B cell (primary cell): ENCODE measurements at regions of chr12 and their contacts with region 1.

Region 1: GRCh38 chr12:92145731-92146496 is at the start of gene BTG1:
- DNase-seq: peak; percentile 100
- ATAC-seq: peak; percentile 76
- H3K4me3 ChIP-seq: peak within 1 kb of the TSS; percentile 94 to 100 (median 96)
- H3K4me3 Mint-ChIP-seq: peak within 1 kb of the TSS; percentile 98
- H3K27ac ChIP-seq: peak within 1 kb of the TSS; percentile 87 to 91
- H3K27ac Mint-ChIP-seq: peak within 1 kb of the TSS; percentile 99
- H3K4me1 ChIP-seq: peaks cover 24 to 27% of the 10 kb centered on the region in 2 donors
- H3K4me1 Mint-ChIP-seq: peaks cover 31% of the 10 kb centered on the region
- H3K27me3 ChIP-seq: no peaks in the 10 kb centered on the region
- H3K27me3 Mint-ChIP-seq: no peaks in the 10 kb centered on the region
- CTCF ChIP-seq: no peak
- total RNA-seq, gene BTG1: 733 and 790 TPM in 2 replicates

Region 2: GRCh38 chr12:91577586-91578539 is 568.1 kb before region 1 on chr12:
- CTCF ChIA-PET with region 1: interaction called, 4 read pairs
- POLR2A ChIA-PET with region 1: no interaction called
- intact Hi-C with region 1: loop called (anchors 5 kb)
- DNase-seq: peak; percentile 45
- ATAC-seq: peak; percentile 82
- H3K4me3 ChIP-seq: peak overlapping the region in 2 of 5 experiments; percentile 28 to 51
- H3K4me3 Mint-ChIP-seq: peak overlapping the region; percentile 68
- H3K27ac ChIP-seq: no peak overlapping the region
- H3K27ac Mint-ChIP-seq: no peak overlapping the region
- H3K4me1 ChIP-seq: peaks cover 0 to 5% of the 10 kb centered on the region in 2 donors
- H3K4me1 Mint-ChIP-seq: peaks cover 4% of the 10 kb centered on the region
- H3K27me3 ChIP-seq: peaks cover 0 to under 1% (median 0%) of the 10 kb centered on the region in 4 experiments
- H3K27me3 Mint-ChIP-seq: peaks cover 20% of the 10 kb centered on the region
- CTCF ChIP-seq: peak; percentile 92

Region 3: DNA sequence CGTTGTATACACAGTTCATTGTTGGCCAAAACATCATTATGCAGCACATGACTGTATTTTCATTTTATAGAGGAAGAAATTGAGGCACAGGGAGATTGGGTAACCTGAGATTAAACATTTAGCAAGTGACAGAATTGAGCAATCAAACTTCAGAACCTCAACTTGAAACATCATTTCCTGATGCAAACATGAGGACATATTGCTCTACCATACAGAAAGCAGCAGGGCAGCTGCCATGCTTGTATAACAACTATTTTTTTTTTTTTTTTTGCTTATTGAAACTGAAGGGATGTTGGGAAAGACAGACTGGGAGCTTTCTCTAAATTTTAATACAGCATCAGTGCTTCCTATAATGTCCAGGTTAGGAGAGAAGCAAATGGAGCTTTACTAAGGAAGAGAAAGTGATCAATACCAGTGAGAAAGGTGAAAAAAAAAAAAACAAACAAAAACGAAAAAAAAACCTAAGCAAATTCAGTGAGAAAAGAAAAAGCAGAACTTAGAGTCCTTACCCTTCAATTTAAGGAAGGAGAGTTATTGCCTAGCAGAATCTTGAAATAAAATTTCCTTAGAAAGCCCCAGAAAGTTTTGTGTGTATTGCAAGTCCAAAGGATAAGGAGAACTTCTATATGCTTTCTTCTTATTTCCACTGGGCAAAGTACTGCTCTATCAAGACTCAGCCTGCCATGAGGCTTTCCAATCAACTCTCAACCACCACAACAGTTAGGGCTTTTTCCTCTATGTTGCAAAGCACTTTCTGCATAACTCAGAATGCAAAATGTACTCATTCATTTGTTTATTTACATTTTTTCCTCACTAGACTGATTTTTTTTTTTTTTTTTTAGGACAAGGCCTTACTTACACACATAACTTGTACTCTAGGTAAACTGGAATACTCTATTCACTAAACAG is 21.9 kb before region 1 on chr12:
- CTCF ChIA-PET with region 1: interaction called, 4 read pairs
- POLR2A ChIA-PET with region 1: interaction called, 13 read pairs
- intact Hi-C with region 1: no loop called
- DNase-seq: peak; percentile 51
- ATAC-seq: peak; percentile 15
- H3K4me3 ChIP-seq: peak overlapping the region in 2 of 5 experiments; percentile 7 to 13
- H3K4me3 Mint-ChIP-seq: peak overlapping the region; percentile 8
- H3K27ac ChIP-seq: peak overlapping the region in 1 of 2 donors; percentile 43
- H3K27ac Mint-ChIP-seq: peak overlapping the region; percentile 2
- H3K4me1 ChIP-seq: peaks cover 18 to 20% of the 10 kb centered on the region in 2 donors
- H3K4me1 Mint-ChIP-seq: peaks cover 36% of the 10 kb centered on the region
- H3K27me3 ChIP-seq: no peaks in the 10 kb centered on the region
- H3K27me3 Mint-ChIP-seq: no peaks in the 10 kb centered on the region
- CTCF ChIP-seq: no peak

Region 4: GRCh38 chr12:92170050-92170449 is 24.1 kb after region 1 on chr12:
- CTCF ChIA-PET with region 1: interaction called, 41 read pairs
- POLR2A ChIA-PET with region 1: interaction called, 137 read pairs
- intact Hi-C with region 1: loop called (anchors 1 kb)
- DNase-seq: no peak
- ATAC-seq: no peak
- H3K4me3 ChIP-seq: no peak overlapping the region
- H3K4me3 Mint-ChIP-seq: peak overlapping the region; percentile 29
- H3K27ac ChIP-seq: peak overlapping the region; percentile 91 to 95
- H3K27ac Mint-ChIP-seq: peak overlapping the region; percentile 75
- H3K4me1 ChIP-seq: peaks cover 46 to 63% of the 10 kb centered on the region in 2 donors
- H3K4me1 Mint-ChIP-seq: peaks cover 68% of the 10 kb centered on the region
- H3K27me3 ChIP-seq: no peaks in the 10 kb centered on the region
- H3K27me3 Mint-ChIP-seq: no peaks in the 10 kb centered on the region
- CTCF ChIP-seq: no peak

Region 5: GRCh38 chr12:92218394-92219077 is 72.6 kb after region 1 on chr12:
- CTCF ChIA-PET with region 1: interaction called, 4 read pairs
- POLR2A ChIA-PET with region 1: interaction called, 6 read pairs
- intact Hi-C with region 1: loop called (anchors 5 kb)
- DNase-seq: peak; percentile 54
- ATAC-seq: peak; percentile 73
- H3K4me3 ChIP-seq: no peak overlapping the region
- H3K4me3 Mint-ChIP-seq: peak overlapping the region; percentile 3
- H3K27ac ChIP-seq: no peak overlapping the region
- H3K27ac Mint-ChIP-seq: no peak overlapping the region
- H3K4me1 ChIP-seq: peaks cover 12 to 15% of the 10 kb centered on the region in 2 donors
- H3K4me1 Mint-ChIP-seq: peaks cover 20% of the 10 kb centered on the region
- H3K27me3 ChIP-seq: no peaks in the 10 kb centered on the region
- H3K27me3 Mint-ChIP-seq: no peaks in the 10 kb centered on the region
- CTCF ChIP-seq: no peak

Region 6: DNA sequence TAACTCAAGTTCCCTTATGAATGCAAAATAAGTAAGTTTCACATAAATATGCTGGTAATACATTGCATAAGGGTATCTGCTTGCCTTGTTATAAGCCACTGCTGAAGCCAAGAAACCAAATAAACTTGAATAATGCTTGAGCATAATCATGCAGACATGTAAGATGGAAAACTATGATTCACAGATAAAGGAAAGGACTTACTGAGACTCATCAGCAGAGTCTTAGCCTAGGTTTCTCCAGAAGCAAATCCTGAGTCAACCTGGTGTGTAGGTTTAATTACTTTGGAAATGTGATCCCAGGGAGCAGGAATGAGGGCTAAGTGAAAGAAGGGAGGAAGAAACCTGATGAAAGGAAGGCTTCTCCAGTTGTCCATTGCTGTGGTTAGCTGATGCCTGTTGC is 107.4 kb after region 1 on chr12:
- CTCF ChIA-PET with region 1: no interaction called
- POLR2A ChIA-PET with region 1: no interaction called
- intact Hi-C with region 1: no loop called
- DNase-seq: no peak
- ATAC-seq: no peak
- H3K4me3 ChIP-seq: no peak overlapping the region
- H3K4me3 Mint-ChIP-seq: no peak overlapping the region
- H3K27ac ChIP-seq: no peak overlapping the region
- H3K27ac Mint-ChIP-seq: no peak overlapping the region
- H3K4me1 ChIP-seq: no peaks in the 10 kb centered on the region
- H3K4me1 Mint-ChIP-seq: peaks cover 20% of the 10 kb centered on the region
- H3K27me3 ChIP-seq: no peaks in the 10 kb centered on the region
- H3K27me3 Mint-ChIP-seq: no peaks in the 10 kb centered on the region
- CTCF ChIP-seq: no peak

Region 7: DNA sequence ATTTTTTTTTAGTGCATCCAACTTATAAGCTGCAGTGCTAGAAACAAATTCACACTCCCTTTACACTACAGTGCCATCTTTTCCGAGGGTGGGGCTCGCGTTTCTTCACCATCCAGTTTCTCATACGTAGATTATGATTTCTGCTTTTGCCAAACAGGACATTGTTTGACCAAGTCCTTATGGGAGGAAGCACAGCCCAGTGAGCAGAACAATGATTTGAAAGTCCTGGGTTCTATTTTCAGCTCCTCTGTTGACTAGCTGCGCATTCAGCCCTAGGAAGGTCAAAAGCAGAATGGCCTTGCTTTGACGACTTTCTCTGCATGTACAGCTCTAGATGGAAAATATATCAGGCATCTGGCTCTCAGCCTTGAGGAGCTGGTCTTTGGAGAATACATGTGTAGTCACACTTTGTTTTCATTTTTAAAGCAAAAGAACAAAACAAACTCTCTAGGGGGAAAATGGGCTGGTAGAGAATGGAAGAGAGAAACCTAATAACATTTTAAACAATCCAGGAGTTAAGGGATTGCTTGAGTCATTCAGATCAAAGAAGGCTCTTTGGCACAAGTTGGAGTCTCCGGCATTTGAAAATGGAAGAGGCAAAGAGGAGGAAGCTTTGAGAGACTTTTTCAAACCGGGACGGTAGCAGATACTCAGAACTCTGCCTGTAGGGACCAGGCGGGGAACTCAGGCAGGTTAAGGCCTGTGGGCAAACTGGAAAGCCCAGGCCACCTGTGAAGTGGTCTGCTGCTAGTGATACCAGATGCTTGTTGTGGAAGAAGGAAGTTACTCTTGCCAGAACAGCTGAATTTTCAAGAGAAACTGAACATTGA is 299.6 kb after region 1 on chr12:
- CTCF ChIA-PET with region 1: interaction called, 45 read pairs
- POLR2A ChIA-PET with region 1: interaction called, 94 read pairs
- intact Hi-C with region 1: loop called (anchors 1 kb)
- DNase-seq: peak; percentile 89
- ATAC-seq: peak; percentile 71
- H3K4me3 ChIP-seq: peak overlapping the region in 4 of 5 experiments; percentile 0 to 43 (median 25)
- H3K4me3 Mint-ChIP-seq: peak overlapping the region; percentile 80
- H3K27ac ChIP-seq: peak overlapping the region; percentile 99
- H3K27ac Mint-ChIP-seq: peak overlapping the region; percentile 96
- H3K4me1 ChIP-seq: peaks cover 90 to 93% of the 10 kb centered on the region in 2 donors
- H3K4me1 Mint-ChIP-seq: peaks cover 91% of the 10 kb centered on the region
- H3K27me3 ChIP-seq: no peaks in the 10 kb centered on the region
- H3K27me3 Mint-ChIP-seq: no peaks in the 10 kb centered on the region
- CTCF ChIP-seq: no peak

Region 8: DNA sequence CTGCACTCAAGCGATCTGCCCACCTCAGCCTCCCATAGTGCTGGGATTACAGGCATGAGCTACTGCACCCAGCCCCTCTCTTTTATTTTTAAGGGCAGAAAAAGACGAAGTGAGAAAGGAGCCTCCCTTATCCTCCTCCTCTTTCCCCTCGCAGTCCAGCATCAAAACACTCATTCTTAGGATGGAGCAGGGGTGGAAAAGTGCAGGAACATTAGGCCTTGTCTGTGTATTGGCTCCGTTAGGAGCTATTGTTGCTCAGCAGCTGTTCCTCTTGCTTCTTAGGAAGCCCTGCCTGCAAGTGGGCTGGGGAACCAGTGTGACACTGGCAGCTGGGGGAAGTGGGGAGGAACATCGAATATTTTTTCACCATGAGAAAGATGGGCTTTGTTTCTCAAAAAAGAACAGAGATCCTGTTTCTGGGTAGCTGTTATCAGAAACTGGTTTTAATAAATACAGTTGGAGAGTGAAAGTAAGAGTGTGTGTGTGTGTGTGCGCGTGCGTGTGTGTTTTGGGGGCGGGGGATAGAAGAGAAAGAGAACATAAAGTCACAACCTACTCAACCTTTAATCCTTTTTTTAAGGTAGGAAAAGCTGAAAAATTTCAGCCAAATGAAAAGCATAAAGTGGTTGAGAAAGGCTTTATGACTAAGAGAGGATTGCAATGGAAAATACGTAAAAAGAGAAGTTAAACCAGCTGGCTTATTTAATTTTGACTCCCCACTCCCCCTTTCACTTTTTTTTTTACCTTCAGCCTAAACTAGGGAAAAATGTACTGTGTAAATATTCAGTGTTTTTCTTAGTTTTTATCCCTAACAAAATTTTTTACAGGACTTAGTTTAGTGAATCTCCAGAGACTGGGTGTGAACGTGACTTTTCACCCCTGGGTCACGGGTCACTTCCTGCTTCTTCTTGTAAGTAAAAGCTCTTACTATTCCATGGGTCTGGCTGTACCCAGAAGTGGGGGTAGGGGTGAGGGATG is 359.6 kb after region 1 on chr12:
- CTCF ChIA-PET with region 1: interaction called, 14 read pairs
- POLR2A ChIA-PET with region 1: interaction called, 27 read pairs
- intact Hi-C with region 1: no loop called
- DNase-seq: peak; percentile 75
- ATAC-seq: peak; percentile 61
- H3K4me3 ChIP-seq: peak overlapping the region; percentile 16 to 62 (median 43)
- H3K4me3 Mint-ChIP-seq: peak overlapping the region; percentile 73
- H3K27ac ChIP-seq: peak overlapping the region; percentile 79 to 91
- H3K27ac Mint-ChIP-seq: peak overlapping the region; percentile 87
- H3K4me1 ChIP-seq: peaks cover 60 to 62% of the 10 kb centered on the region in 2 donors
- H3K4me1 Mint-ChIP-seq: peaks cover 65% of the 10 kb centered on the region
- H3K27me3 ChIP-seq: no peaks in the 10 kb centered on the region
- H3K27me3 Mint-ChIP-seq: no peaks in the 10 kb centered on the region
- CTCF ChIP-seq: no peak